ENCODE measurements at regions of chr3 and their contacts with region 1.

Region 1: DNA sequence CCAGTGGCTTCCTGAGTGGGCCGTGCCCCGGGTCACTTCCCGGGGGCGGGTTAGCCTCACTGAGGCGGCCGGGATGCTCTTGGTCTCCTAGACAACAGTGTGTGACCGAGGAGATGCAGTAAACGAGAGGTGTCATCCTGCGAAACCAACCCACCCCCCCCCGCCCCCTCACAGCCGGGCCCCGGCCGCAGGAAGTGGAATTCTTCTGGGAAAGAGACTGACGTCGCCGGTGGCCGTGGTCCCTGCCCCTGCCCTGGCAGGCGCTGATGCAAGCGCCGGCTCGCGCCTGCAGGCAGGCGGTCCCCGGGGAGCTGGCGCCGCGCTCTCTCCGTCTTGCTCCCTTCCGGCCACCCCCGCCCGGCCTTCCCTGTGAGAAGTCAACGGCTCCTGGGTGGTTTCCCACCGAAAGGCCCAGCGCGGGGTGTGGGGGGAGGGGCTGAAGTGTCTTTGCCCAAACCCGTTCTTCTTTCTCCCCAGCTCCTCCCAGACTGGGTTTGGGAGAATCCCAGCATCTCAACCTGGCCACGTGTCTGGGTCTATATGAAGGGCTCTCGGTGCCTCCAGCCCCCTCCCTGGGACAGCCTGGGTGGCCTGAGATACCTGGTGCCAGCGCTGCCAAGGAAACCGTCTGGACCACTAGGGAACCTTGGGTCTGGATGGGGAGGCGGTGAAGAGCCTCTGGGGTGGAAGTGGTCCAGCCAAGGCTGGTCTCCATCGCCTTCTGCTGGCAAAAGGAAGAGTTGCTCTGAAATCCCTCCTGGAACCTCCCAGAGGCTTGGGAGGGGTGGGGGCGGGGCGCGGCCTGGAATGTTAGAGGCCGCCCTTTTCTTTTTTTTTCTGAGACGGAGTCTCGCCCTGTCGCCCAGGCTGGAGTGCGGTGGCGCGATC is 47.3 kb downstream of the BHLHE40 start:
- DNase-seq: peak; percentile 76
- ATAC-seq: peak; percentile 90
- H3K4me3 ChIP-seq: peak overlapping the region; percentile 44 to 69 (median 48); a peak in 5 of 6 replicates
- H3K27ac ChIP-seq: no peak overlapping the region
- H3K4me1 ChIP-seq: peaks cover 45% of the 10 kb centered on the region
- H3K27me3 ChIP-seq: no peaks in the 10 kb centered on the region; a peak in 1 of 5 replicates
- CTCF ChIP-seq: peak; percentile 87
- EP300 ChIP-seq: no peak; a peak in 1 of 4 replicates
- POLR2A ChIP-seq: no peak
- RAD21 ChIP-seq: peak; percentile 86

Region 2: GRCh38 chr3:4429648-4430350 is 596.8 kb before region 1 on chr3:
- CTCF ChIA-PET with region 1: no interaction called
- POLR2A ChIA-PET with region 1: no interaction called
- in situ Hi-C with region 1: no loop called
- intact Hi-C with region 1: no loop called
- DNase-seq: no peak
- ATAC-seq: no peak
- H3K4me3 ChIP-seq: no peak overlapping the region
- H3K27ac ChIP-seq: no peak overlapping the region
- H3K4me1 ChIP-seq: peaks cover 26% of the 10 kb centered on the region
- H3K27me3 ChIP-seq: no peaks in the 10 kb centered on the region
- CTCF ChIP-seq: no peak
- EP300 ChIP-seq: no peak
- POLR2A ChIP-seq: no peak
- RAD21 ChIP-seq: no peak

Region 3: GRCh38 chr3:4712143-4712542 is 314.4 kb before region 1 on chr3:
- CTCF ChIA-PET with region 1: interaction called, 10 read pairs
- POLR2A ChIA-PET with region 1: no interaction called
- in situ Hi-C with region 1: no loop called
- intact Hi-C with region 1: loop called (anchors 1 kb)
- DNase-seq: no peak
- ATAC-seq: no peak
- H3K4me3 ChIP-seq: no peak overlapping the region
- H3K27ac ChIP-seq: no peak overlapping the region
- H3K4me1 ChIP-seq: no peaks in the 10 kb centered on the region
- H3K27me3 ChIP-seq: no peaks in the 10 kb centered on the region
- CTCF ChIP-seq: no peak
- EP300 ChIP-seq: no peak
- POLR2A ChIP-seq: no peak
- RAD21 ChIP-seq: no peak

Region 4: GRCh38 chr3:4722103-4722502 is 304.5 kb before region 1 on chr3:
- CTCF ChIA-PET with region 1: interaction called, 10 read pairs
- POLR2A ChIA-PET with region 1: no interaction called
- in situ Hi-C with region 1: no loop called
- intact Hi-C with region 1: loop called (anchors 1 kb)
- DNase-seq: peak; percentile 56
- ATAC-seq: peak; percentile 76
- H3K4me3 ChIP-seq: no peak overlapping the region
- H3K27ac ChIP-seq: no peak overlapping the region
- H3K4me1 ChIP-seq: peaks cover 36% of the 10 kb centered on the region
- H3K27me3 ChIP-seq: no peaks in the 10 kb centered on the region
- CTCF ChIP-seq: peak; percentile 77
- EP300 ChIP-seq: no peak
- POLR2A ChIP-seq: no peak
- RAD21 ChIP-seq: peak; percentile 44; the same call in 1 of the 2 replicates

Region 5: DNA sequence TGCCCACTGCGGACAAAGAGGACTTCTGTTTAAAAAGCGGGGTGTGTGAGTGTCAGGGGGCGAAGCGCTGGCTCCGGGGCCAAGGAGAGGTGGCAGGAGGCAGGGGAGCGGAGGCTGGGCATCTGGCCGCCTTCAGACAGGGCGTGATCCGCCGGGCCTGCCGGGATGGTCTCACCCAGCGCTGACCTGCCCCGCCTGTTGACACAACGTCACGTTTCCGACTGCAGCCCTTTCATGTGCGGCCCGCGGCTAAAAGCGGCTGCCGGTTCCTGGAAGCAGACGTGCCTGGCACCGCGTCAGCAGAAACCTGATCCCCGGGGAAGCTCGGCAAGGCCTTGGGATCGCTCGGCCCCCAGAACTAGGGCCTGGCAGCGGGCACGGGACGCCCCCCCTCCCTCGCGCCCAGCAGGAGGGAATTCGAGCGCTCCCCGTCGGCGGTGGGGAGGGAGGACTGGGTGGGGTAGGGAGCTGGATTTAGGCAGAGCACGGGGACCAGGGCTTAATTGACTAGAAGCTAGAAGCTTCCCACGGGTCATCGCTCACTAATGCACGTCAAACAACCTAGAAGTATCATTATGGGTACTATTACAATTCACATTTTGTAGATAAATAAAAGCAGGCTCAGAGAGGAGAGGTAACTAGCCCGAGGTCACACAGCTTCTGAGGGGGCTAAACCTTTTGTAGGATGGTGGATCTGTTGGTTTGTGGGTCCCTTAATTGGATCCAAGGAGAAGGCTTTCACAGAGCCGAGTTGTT is 39.6 kb before region 1 on chr3:
- CTCF ChIA-PET with region 1: no interaction called
- POLR2A ChIA-PET with region 1: interaction called, 3 read pairs
- in situ Hi-C with region 1: no loop called
- intact Hi-C with region 1: loop called (anchors 2 kb)
- DNase-seq: peak; percentile 94
- ATAC-seq: peak; percentile 91
- H3K4me3 ChIP-seq: peak overlapping the region; percentile 33 to 54 (median 40); a peak in 5 of 6 replicates
- H3K27ac ChIP-seq: peak overlapping the region; percentile 66
- H3K4me1 ChIP-seq: peaks cover 66% of the 10 kb centered on the region
- H3K27me3 ChIP-seq: no peaks in the 10 kb centered on the region
- CTCF ChIP-seq: peak; percentile 63
- EP300 ChIP-seq: peak; percentile 89 to 95; a peak in 3 of 4 replicates
- POLR2A ChIP-seq: 0 out of 4 replicates have a peak, but pooled peaks of 1 of the 2 experiments have one; percentile 16
- RAD21 ChIP-seq: peak; percentile 17; the same call in 1 of the 2 replicates

Region 6: GRCh38 chr3:5057857-5058324 is 31.3 kb after region 1 on chr3:
- CTCF ChIA-PET with region 1: no interaction called
- POLR2A ChIA-PET with region 1: no interaction called
- in situ Hi-C with region 1: no loop called
- intact Hi-C with region 1: loop called (anchors 2 kb)
- DNase-seq: peak; percentile 60
- ATAC-seq: peak; percentile 94
- H3K4me3 ChIP-seq: no peak overlapping the region
- H3K27ac ChIP-seq: no peak overlapping the region
- H3K4me1 ChIP-seq: peaks cover 6% of the 10 kb centered on the region; the same call in 1 of the 2 replicates
- H3K27me3 ChIP-seq: peaks cover 0 to 22% of the 10 kb centered on the region in 2 experiments; a peak in 2 of 5 replicates
- CTCF ChIP-seq: peak; percentile 81
- EP300 ChIP-seq: no peak
- POLR2A ChIP-seq: no peak
- RAD21 ChIP-seq: peak; percentile 77